PC-9 (cell line): ENCODE measurements at regions of chr5 and their contacts with region 1.

Region 1: GRCh38 chr5:173793721-173794690 is 94.1 kb upstream of the CPEB4 start:
- DNase-seq: peak; percentile 51 to 64
- H3K4me3 ChIP-seq: no peak overlapping the region
- H3K27ac ChIP-seq: peak overlapping the region; percentile 74
- H3K4me1 ChIP-seq: peaks cover 70% of the 10 kb centered on the region
- H3K27me3 ChIP-seq: no peaks in the 10 kb centered on the region
- CTCF ChIP-seq: no peak

Region 2: GRCh38 chr5:173165177-173166016 is 628.6 kb before region 1 on chr5:
- CTCF ChIA-PET with region 1: no interaction called
- POLR2A ChIA-PET with region 1: no interaction called
- intact Hi-C with region 1: no loop called
- DNase-seq: no peak
- H3K4me3 ChIP-seq: no peak overlapping the region
- H3K27ac ChIP-seq: no peak overlapping the region
- H3K4me1 ChIP-seq: no peaks in the 10 kb centered on the region
- H3K27me3 ChIP-seq: no peaks in the 10 kb centered on the region
- CTCF ChIP-seq: no peak

Region 3: DNA sequence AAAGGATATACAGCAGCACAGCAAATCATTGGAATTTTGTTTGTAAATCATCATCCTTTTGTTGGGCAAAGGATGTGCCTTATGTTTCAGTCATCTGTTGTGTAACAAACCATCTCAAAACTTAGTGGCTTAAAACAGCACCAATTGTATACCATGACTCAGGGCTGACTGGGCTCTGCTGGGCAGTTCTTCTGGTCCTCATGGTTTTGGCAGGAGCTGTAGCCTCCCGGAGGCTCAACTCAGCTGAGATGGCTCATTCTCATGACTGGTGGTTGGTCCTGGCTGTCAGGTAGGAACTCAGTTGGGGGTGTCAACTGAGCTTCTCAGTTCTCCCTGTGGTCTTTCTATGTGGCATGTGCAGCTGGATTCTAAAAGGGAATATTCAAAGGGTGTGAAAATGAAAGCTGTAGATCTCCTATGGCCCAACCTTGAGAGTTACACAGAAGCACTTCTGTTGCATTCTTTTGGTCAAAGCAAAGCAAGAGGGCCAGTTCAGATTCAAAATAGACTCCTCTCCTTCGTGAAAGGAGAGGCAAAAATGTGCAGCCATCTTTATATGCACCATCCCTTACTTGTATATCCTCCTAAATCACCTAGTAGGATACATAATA is 55.1 kb after region 1 on chr5:
- CTCF ChIA-PET with region 1: no interaction called
- POLR2A ChIA-PET with region 1: no interaction called
- intact Hi-C with region 1: no loop called
- DNase-seq: peak in 1 of 2 experiments; percentile 55
- H3K4me3 ChIP-seq: no peak overlapping the region
- H3K27ac ChIP-seq: no peak overlapping the region
- H3K4me1 ChIP-seq: peaks cover 7% of the 10 kb centered on the region
- H3K27me3 ChIP-seq: no peaks in the 10 kb centered on the region
- CTCF ChIP-seq: no peak

Region 4: GRCh38 chr5:173859428-173860159 is 65.6 kb after region 1 on chr5:
- CTCF ChIA-PET with region 1: no interaction called
- POLR2A ChIA-PET with region 1: interaction called, 6 read pairs
- intact Hi-C with region 1: loop called (anchors 2 kb)
- DNase-seq: peak; percentile 73 to 83
- H3K4me3 ChIP-seq: no peak overlapping the region
- H3K27ac ChIP-seq: peak overlapping the region; percentile 54
- H3K4me1 ChIP-seq: peaks cover 50% of the 10 kb centered on the region
- H3K27me3 ChIP-seq: no peaks in the 10 kb centered on the region
- CTCF ChIP-seq: no peak

Region 5: DNA sequence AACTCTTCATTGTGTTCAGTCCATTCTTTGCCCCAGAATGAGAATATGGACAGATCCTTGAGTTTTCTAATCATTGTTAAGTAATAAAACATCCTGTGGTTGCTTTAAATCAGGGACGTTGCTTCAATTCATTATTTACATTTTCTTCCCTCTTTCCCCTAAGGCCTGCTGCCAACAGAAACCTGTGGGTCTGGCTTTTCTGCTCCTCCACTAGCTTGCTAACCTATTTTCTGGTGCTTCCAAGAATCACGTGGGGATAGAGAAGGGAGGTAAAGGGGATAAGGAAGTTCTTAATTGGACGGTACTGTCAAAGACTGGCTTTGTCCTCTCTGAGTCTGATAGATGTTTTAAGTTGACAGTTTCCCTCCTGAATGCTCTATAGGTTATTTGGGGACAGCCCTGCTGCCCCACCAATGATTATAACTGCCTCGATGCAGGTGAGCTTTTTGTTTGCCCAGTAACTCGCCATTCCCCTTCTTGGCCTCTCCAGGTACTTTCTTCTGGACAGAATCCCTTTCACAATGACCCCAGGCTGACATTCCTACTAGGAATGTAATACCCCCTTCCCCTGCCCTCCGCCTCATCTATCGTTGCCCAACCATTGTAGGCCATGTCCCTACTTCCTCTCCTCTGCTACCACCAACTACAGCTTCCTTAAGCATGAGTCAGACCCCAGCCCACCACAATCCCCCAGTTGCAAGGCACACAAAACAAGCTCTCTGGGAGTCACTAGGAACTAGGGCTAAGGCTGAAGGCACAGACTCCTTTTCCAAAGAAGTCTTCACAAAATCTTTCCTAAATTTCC is 74.3 kb after region 1 on chr5:
- CTCF ChIA-PET with region 1: no interaction called
- POLR2A ChIA-PET with region 1: no interaction called
- intact Hi-C with region 1: loop called (anchors 2 kb)
- DNase-seq: peak; percentile 72 to 96
- H3K4me3 ChIP-seq: peak overlapping the region; percentile 35; the same call in 1 of the 2 replicates
- H3K27ac ChIP-seq: peak overlapping the region; percentile 84
- H3K4me1 ChIP-seq: peaks cover 61% of the 10 kb centered on the region
- H3K27me3 ChIP-seq: no peaks in the 10 kb centered on the region
- CTCF ChIP-seq: no peak

Region 6: GRCh38 chr5:173878224-173878967 is 84.4 kb after region 1 on chr5:
- CTCF ChIA-PET with region 1: no interaction called
- POLR2A ChIA-PET with region 1: interaction called, 9 read pairs
- intact Hi-C with region 1: loop called (anchors 1 kb)
- DNase-seq: no peak
- H3K4me3 ChIP-seq: no peak overlapping the region
- H3K27ac ChIP-seq: no peak overlapping the region
- H3K4me1 ChIP-seq: peaks cover 27% of the 10 kb centered on the region
- H3K27me3 ChIP-seq: no peaks in the 10 kb centered on the region
- CTCF ChIP-seq: no peak

Region 7: DNA sequence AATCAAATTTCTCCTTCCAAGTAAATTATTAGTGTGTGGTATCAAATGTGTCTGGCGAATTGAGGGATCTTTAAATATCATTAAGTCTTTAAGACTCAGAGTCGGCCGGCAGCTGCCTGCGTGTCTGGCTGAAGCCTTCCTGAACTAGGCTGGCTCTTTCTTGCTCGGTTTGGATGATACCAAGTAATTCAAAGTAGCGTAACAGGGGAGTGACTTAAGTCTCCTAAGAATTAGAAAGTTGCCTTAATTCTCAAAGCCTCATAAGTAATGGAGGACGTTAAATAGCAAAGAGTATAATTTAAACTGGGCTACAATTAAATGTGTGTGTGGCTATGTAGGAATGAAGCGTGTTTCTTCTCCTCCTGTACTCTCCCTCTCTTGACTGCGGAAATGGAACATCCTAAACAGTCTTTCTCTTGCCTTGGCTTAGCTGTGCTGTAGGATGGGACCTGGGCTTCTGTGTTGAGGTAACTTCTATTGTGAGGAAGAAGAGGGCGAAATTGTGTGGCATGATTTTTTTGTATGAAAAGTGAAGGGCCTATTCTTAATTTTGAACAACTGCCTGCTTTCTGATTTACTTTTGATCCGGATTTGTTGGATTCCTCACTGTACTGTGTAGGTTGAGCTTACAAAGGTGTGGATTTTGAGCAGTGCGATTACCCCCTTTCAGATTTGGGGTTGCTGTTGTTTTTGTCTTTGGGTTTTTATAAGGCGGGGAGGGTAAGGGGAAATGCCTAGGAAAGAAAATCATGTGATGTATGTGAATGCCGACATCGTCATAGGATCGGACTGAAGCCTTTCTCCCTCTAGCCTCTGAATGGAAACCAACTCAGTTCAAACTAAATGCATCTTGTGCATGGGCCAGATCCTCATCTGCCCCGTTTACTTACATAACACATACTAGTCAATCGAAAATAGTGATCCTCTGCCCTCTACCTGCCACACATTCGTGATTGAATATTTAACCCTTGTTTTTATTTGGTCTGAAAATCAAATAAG is 124.1 kb after region 1 on chr5:
- CTCF ChIA-PET with region 1: no interaction called
- POLR2A ChIA-PET with region 1: interaction called, 3 read pairs
- intact Hi-C with region 1: loop called (anchors 1 kb)
- DNase-seq: peak; percentile 53 to 76
- H3K4me3 ChIP-seq: peak overlapping the region; percentile 79
- H3K27ac ChIP-seq: peak overlapping the region; percentile 86
- H3K4me1 ChIP-seq: peaks cover 29% of the 10 kb centered on the region
- H3K27me3 ChIP-seq: no peaks in the 10 kb centered on the region
- CTCF ChIP-seq: peak; percentile 43; the same call in 1 of the 2 replicates

Region 8: DNA sequence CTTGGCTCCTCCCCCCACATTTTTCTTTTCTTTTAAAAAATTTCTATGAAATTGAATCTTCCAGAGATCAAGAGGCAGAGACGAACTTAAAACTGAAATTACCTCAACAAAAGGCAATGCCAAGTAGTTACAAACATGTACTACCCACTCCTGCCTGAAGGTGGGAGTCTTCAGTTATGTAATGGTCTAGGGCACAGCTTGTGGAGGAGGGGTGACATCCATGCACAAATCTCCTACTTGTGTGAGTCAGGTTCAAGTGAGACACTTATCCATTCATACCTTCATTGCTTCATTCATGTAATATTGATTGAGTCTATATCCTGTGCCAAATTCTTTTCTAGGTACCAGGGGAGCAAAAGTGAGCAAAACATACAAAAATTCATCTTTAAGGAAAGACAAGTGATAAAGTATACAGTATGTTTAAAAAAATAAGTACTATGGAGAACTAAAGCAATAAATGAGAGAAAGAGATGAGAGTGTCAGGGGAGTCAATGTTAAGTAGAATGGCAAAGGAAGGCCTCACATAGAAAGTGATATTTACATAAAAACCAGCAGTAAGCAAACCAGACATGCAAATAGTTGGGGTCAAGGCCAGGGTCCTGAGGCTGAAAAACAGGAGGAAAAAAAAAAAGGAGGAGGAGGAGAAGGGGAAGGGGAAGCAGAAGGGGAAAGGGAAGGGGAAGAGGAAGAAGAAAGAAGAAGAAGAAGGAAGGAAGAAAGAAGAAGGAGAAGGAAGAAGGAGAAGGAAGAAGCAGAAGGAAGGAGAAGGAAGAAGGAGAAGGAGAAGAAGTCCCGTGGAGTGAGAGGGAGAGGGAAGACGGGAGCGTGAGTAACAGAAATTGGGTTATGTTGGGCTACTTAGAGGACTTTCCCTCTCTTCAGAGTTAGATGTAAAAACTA is 226.6 kb after region 1 on chr5:
- CTCF ChIA-PET with region 1: no interaction called
- POLR2A ChIA-PET with region 1: no interaction called
- intact Hi-C with region 1: no loop called
- DNase-seq: peak in 1 of 2 experiments; percentile 58
- H3K4me3 ChIP-seq: no peak overlapping the region
- H3K27ac ChIP-seq: no peak overlapping the region
- H3K4me1 ChIP-seq: no peaks in the 10 kb centered on the region
- H3K27me3 ChIP-seq: peaks cover 47% of the 10 kb centered on the region
- CTCF ChIP-seq: peak; percentile 75